ENCODE measurements at regions of chr7 and their contacts with region 1.

Region 1: DNA sequence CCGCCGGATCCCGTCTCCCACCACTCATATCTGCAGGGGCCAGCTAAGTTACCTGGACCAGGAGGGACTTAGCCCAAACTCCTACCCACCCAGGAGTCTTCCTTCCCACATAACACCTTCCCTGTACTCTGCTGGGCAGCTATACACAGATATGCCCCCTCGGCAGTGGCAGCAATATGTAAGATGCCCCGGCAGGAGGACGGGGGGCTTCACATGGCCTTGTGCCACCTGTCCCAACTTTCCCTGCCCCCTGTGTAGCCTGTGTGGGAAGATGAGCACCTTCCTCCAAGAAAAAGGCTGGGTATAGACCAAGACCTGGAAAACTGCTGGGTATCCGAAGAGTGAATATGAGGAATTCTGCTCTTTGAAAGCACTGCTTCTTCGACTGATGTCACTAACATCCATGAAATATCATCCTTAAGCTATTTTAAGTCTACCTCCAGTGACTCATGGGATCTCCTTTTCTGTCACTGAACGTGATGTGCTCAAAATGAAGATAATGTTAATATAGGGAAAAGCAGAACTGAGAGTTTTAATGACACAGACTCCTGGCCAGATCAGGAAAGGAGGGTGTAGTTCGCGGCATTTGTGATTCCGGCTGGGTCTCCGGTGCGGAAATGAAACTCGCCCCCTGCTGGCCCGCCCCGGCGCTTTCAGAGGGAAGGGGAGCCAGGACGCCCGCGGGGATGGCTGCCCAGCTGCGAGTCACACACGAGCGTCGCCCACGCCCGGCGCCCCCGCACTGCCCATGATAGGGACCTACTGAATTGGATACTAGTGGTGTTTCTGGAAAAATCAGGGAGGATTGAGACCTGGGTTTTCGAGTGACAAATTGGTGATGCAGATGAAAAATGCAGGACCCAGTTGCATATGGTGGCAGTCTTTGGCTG is 256.9 kb upstream of the NFE2L3 start:
- DNase-seq: peak; percentile 51
- H3K4me3 Mint-ChIP-seq: peak overlapping the region; percentile 3
- H3K27ac Mint-ChIP-seq: no peak overlapping the region
- H3K4me1 Mint-ChIP-seq: peaks cover 33% of the 10 kb centered on the region
- H3K27me3 Mint-ChIP-seq: peaks cover 6% of the 10 kb centered on the region

Region 2: GRCh38 chr7:25913598-25914224 is 18.6 kb after region 1 on chr7:
- intact Hi-C with region 1: no loop called
- DNase-seq: no peak
- H3K4me3 Mint-ChIP-seq: no peak overlapping the region
- H3K27ac Mint-ChIP-seq: no peak overlapping the region
- H3K4me1 Mint-ChIP-seq: no peaks in the 10 kb centered on the region
- H3K27me3 Mint-ChIP-seq: peaks cover 18% of the 10 kb centered on the region

Region 3: GRCh38 chr7:25951031-25951948 is 56.1 kb after region 1 on chr7:
- intact Hi-C with region 1: no loop called
- DNase-seq: peak; percentile 87
- H3K4me3 Mint-ChIP-seq: peak overlapping the region; percentile 91
- H3K27ac Mint-ChIP-seq: peak overlapping the region; percentile 74
- H3K4me1 Mint-ChIP-seq: peaks cover 17% of the 10 kb centered on the region
- H3K27me3 Mint-ChIP-seq: peaks cover 5% of the 10 kb centered on the region

Region 4: DNA sequence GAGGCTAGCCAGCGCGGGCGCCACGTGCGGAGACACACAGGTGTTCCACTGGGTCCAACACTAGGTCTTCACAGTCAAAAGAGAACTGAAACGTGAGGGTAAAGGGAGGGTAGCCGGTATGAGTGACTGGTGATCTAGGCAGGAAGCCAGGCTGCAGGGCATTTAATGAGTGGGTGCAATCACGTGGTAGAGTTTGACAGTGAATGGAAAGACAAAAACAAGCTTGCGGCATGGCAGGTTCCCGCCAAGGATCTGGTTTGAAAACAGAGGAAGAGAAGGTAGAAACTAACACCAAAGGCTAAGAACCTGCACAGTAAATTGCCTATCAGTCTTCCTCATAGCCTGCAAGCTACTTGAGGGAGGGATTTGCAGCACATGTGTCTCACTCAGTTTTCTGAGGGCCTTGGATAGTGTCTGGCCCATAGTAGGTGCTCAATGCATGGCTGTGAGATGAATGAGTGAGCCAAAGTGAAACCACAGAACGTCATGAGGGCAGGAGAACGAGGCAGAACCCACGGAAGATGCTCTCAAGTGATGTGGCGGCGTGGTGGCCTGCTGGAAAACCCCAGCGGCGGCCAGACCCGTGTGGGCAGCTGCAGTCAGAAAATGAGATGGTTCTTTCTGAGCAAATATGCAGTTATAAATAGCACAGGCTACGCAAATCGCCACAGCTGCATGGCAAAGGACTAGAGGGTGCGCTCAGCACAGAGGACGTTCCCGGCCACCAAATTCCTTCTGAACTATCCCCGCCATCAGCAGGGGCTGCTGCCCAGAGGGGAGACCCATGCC is 73.3 kb after region 1 on chr7:
- intact Hi-C with region 1: loop called (anchors 5 kb)
- DNase-seq: peak; percentile 26
- H3K4me3 Mint-ChIP-seq: peak overlapping the region; percentile 4
- H3K27ac Mint-ChIP-seq: peak overlapping the region; percentile 69
- H3K4me1 Mint-ChIP-seq: peaks cover 33% of the 10 kb centered on the region
- H3K27me3 Mint-ChIP-seq: peaks cover 25% of the 10 kb centered on the region

Region 5: DNA sequence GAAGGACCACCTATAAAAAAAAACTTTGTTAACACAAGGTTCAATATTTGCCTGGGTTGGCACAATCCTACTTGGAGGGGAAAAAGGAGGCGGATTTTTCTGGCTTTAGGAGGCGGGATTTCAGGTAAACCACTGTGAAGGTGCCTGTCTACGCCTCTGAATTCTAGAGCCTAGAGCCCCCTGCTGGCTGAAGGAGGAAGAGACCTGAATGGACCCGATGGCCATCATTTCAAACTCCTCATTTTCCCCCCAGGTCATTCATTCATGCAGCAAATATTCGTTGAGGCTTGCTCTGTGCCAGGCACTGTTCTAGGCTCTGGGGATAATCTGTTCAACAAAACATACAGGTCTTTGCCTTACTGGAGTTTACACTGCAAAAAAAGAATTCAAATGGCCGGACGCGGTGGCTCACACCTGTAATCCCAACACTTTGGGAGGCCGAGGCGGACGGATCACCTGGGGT is 166.6 kb after region 1 on chr7:
- intact Hi-C with region 1: loop called (anchors 1 kb)
- DNase-seq: peak; percentile 38
- H3K4me3 Mint-ChIP-seq: no peak overlapping the region
- H3K27ac Mint-ChIP-seq: no peak overlapping the region
- H3K4me1 Mint-ChIP-seq: peaks cover 15% of the 10 kb centered on the region
- H3K27me3 Mint-ChIP-seq: peaks cover 13% of the 10 kb centered on the region

Region 6: GRCh38 chr7:26078437-26079336 is 183.5 kb after region 1 on chr7:
- intact Hi-C with region 1: loop called (anchors 1 kb)
- DNase-seq: peak; percentile 66
- H3K4me3 Mint-ChIP-seq: no peak overlapping the region
- H3K27ac Mint-ChIP-seq: no peak overlapping the region
- H3K4me1 Mint-ChIP-seq: peaks cover 9% of the 10 kb centered on the region
- H3K27me3 Mint-ChIP-seq: peaks cover 76% of the 10 kb centered on the region

Region 7: DNA sequence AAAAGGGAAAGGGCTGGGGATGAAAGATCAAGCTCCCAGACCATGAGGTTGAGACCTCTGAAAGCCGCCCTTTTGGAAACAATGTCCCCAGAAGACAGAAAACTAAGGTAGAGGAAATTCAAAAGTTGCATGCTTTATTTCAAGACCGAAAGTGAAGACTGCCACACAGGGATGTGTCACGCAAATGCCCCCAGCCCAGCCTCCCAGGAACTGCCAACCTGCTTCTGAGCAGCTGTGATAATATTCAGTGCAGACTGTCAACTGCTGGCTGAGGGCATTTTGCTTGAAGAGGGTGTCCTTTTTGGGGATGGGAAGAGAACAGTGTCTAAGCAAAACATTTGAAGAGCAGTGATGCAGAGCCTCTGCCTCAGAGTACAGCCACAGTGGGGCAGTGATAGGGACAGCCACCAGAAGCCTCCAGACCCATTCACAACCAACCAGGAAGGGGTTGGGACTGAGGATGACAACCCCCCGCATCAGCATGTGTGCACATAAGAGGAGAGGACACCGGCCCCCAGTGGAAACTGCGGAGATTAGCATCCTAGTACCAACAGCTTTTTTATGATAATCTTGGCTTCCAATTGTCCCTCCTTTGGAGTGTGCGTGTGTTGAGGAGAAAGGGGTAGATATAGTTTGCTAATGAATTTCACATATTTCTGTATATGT is 222.1 kb after region 1 on chr7:
- intact Hi-C with region 1: no loop called
- DNase-seq: no peak
- H3K4me3 Mint-ChIP-seq: no peak overlapping the region
- H3K27ac Mint-ChIP-seq: no peak overlapping the region
- H3K4me1 Mint-ChIP-seq: peaks cover 8% of the 10 kb centered on the region
- H3K27me3 Mint-ChIP-seq: peaks cover 5% of the 10 kb centered on the region

Region 8: DNA sequence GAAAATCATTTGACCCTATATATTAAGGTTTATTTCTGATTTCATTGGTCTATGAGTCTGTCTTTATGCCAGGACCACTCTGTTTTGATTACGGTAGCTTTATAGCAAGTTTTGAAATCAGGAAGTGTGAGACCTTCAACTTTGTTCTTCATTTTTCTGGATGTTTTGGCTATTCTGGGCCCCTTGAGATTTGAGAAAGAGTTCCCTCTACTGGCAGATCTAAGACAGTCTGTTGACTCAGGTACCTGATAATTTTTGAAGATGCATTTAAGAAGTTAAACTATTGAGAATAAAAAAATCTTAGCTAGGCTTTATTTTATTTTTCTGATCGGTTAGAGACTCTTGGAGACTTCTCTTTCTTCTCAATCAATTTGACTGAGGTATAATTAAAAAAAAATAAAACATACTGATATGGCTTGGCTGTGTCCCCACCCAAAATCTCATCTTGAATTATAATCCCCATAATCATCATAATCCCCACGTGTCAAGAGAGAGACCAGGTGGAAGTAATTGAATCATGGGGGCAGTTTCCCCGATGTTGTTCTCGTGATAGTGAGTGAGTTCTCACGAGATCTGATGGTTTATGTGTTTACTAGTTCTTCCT is 605.7 kb after region 1 on chr7:
- intact Hi-C with region 1: loop called (anchors 2 kb)
- DNase-seq: no peak
- H3K4me3 Mint-ChIP-seq: no peak overlapping the region
- H3K27ac Mint-ChIP-seq: no peak overlapping the region
- H3K4me1 Mint-ChIP-seq: no peaks in the 10 kb centered on the region
- H3K27me3 Mint-ChIP-seq: peaks cover 13% of the 10 kb centered on the region